CD4-positive, alpha-beta T cell (primary cell): ENCODE measurements at regions of chr6 and their contacts with region 1.

Region 1: GRCh38 chr6:83824388-83824801 is 28.8 kb upstream of the RIPPLY2 start:
- DNase-seq: no peak
- ATAC-seq: no peak
- H3K4me3 ChIP-seq: no peak overlapping the region
- H3K4me3 Mint-ChIP-seq: no peak overlapping the region
- H3K27ac ChIP-seq: no peak overlapping the region
- H3K27ac Mint-ChIP-seq: no peak overlapping the region
- H3K4me1 ChIP-seq: no peaks in the 10 kb centered on the region
- H3K4me1 Mint-ChIP-seq: no peaks in the 10 kb centered on the region
- H3K27me3 ChIP-seq: no peaks in the 10 kb centered on the region
- H3K27me3 Mint-ChIP-seq: peaks cover 13% of the 10 kb centered on the region
- CTCF ChIP-seq: no peak

Region 2: GRCh38 chr6:84103029-84103428 is 278.6 kb after region 1 on chr6:
- CTCF ChIA-PET with region 1: no interaction called
- POLR2A ChIA-PET with region 1: no interaction called
- intact Hi-C with region 1: loop called in 1 of 2 experiments (anchors 10 kb)
- DNase-seq: no peak
- ATAC-seq: no peak
- H3K4me3 ChIP-seq: no peak overlapping the region
- H3K4me3 Mint-ChIP-seq: no peak overlapping the region
- H3K27ac ChIP-seq: no peak overlapping the region
- H3K27ac Mint-ChIP-seq: no peak overlapping the region
- H3K4me1 ChIP-seq: no peaks in the 10 kb centered on the region
- H3K4me1 Mint-ChIP-seq: no peaks in the 10 kb centered on the region
- H3K27me3 ChIP-seq: no peaks in the 10 kb centered on the region
- H3K27me3 Mint-ChIP-seq: peaks cover 12% of the 10 kb centered on the region
- CTCF ChIP-seq: no peak